ENCODE measurements at regions of chr15 and their contacts with region 1.

Region 1: DNA sequence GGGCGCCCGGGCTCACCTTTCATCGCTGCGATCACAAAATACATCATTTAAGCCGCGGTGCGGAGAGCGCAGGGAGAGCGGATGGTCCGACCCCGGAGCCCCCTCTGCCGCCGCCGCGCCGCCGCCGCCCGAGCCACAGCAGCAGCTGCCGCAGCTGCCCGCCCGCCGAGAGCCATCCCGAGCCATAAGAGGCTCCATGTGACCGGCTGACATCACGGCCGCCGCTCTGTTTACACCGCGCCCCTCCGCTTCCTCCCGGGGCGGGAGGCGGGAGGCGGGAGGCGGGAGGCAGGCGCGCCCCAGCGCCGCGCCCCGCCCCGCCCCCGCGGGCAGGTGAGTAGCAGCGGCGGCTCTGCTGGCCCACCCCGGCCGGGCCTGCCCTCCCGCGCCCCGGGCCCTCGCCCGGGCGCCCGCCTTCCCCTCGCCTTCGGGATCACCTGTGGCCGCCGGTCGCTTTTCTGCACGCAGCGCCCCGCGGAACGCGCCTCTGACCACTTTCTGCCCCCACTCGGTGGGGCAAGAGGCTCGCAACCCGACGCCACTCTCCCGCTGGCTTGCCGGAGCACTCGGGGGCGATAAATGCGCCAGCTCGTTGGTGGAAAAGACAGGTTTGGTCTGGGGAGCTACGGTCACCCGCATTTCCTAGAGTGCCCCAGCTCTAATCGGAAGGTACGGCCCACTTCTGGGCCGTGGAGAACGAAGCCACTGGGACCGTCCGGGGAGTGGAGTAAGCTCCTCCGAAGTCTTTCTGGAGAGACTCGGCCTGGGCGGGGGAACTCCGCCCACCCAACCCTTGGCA is 113.6 kb upstream of the ICE2 start:
- DNase-seq: peak; percentile 94

Region 2: GRCh38 chr15:60932051-60932915 is 339.7 kb after region 1 on chr15:
- intact Hi-C with region 1: loop called in 1 of 2 experiments (anchors 10 kb)
- DNase-seq: peak; percentile 83

Region 3: GRCh38 chr15:61264986-61265385 is 672.4 kb after region 1 on chr15:
- intact Hi-C with region 1: no loop called
- DNase-seq: no peak

Region 4: GRCh38 chr15:61824291-61824690 is 1231.7 kb after region 1 on chr15:
- intact Hi-C with region 1: no loop called
- DNase-seq: no peak